Stomach (tissue), 19 donors: ENCODE measurements at regions of chr19 and their contacts with region 1.

Region 1: GRCh38 chr19:3665681-3666544 is 34.4 kb downstream of the PIP5K1C start:
- DNase-seq: peak; percentile 69 to 79
- H3K4me3 ChIP-seq: no peak overlapping the region
- H3K27ac ChIP-seq: no peak overlapping the region
- H3K4me1 ChIP-seq: peaks cover 25 to 52% (median 37%) of the 10 kb centered on the region in 4 donors
- H3K27me3 ChIP-seq: no peaks in the 10 kb centered on the region
- CTCF ChIP-seq: peak in 6 of 7 experiments; percentile 94 to 99 (median 98)
- EP300 ChIP-seq: no peak
- POLR2A ChIP-seq: no peak

Region 2: DNA sequence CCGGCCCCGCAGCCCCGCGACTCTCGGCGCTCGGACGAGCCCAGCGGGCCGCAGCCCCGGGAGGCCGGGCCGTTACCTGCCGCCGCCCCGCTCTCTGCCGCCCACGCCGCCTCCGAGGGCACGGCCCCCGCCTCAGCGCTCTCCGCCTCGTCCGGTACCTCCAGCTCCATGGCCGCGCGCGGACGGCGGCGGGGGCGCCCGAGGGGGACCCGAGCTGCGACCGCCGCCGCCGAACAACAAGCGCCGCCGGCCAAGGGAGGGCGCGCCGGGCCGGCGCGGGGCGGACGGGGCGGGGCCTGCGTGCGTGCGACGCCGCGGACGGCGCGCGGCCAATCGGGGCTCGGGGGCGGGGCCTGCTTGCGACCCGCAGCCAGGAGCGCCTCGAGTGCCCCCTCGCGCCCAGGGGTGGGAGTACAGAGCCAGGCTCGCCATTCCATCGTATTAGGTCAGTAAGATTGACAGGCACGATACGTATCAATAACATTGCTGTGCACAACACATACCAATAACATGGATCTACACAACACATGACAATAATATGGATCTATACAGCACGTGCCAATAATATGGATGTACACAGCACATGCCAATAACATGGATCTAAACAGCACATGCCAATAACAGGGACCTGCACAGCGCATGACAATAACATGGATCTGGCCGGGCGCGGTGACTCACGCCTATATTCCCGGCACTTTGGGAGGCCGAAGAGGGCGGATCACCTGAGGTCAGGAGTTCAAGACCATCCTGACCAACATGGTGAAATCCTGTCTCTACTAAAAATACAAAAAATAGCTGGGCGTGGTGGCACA is 34.5 kb after region 1 on chr19 and contains the start of gene PIP5K1C:
- intact Hi-C with region 1: loop called (anchors 5 kb)
- DNase-seq: peak; percentile 94 to 97
- H3K4me3 ChIP-seq: peak within 1 kb of the TSS; percentile 95 to 99 (median 96)
- H3K27ac ChIP-seq: peak within 1 kb of the TSS; percentile 66 to 95 (median 83)
- H3K4me1 ChIP-seq: peaks cover 15 to 52% (median 34%) of the 10 kb centered on the region in 4 donors
- H3K27me3 ChIP-seq: peaks cover 0 to 9% (median 0%) of the 10 kb centered on the region in 3 donors
- CTCF ChIP-seq: peak in 5 of 7 experiments; percentile 48 to 82 (median 78)
- EP300 ChIP-seq: no peak
- POLR2A ChIP-seq: no peak
- total RNA-seq, gene PIP5K1C: 15.1 to 164 (median 36.8) TPM

Region 3: DNA sequence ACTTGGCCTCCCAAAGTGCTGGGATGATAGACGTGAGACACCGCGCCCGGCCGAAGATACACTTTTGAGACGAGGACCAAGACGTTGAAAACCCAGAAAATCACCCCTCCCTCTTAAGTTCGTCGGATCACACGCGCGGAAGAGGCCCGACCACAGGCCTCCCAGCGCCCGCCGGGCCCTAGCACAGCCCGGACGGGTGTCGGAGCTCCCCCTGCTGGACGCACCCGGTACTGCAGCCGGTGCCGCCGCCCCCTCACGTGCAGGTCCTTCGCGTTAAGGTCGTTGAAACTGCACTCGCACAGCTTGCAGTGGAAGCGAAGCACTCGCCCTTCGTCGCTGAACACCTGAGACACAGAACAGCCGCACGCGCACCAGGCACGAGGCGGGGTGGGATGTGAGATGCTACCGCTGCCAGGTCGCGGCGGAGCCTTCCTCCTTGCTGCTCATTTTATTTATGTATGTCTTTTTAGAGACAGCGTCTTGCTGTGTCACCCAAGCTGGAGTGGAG is 156.0 kb after region 1 on chr19:
- intact Hi-C with region 1: loop called (anchors 5 kb)
- DNase-seq: peak; percentile 82 to 86
- H3K4me3 ChIP-seq: no peak overlapping the region
- H3K27ac ChIP-seq: no peak overlapping the region
- H3K4me1 ChIP-seq: peaks cover 0 to 15% (median 8%) of the 10 kb centered on the region in 4 donors
- H3K27me3 ChIP-seq: peaks cover 0 to 30% (median 3%) of the 10 kb centered on the region in 3 donors
- CTCF ChIP-seq: peak in 6 of 7 experiments; percentile 99 to 100 (median 100)
- EP300 ChIP-seq: no peak
- POLR2A ChIP-seq: no peak

Region 4: GRCh38 chr19:3950871-3951861 is 285.3 kb after region 1 on chr19:
- intact Hi-C with region 1: no loop called
- DNase-seq: peak in 1 of 2 donors; percentile 58
- H3K4me3 ChIP-seq: peak overlapping the region in 3 of 4 donors; percentile 12 to 22 (median 19)
- H3K27ac ChIP-seq: peak overlapping the region in 4 of 5 donors; percentile 32 to 82 (median 74)
- H3K4me1 ChIP-seq: peaks cover 10 to 43% (median 30%) of the 10 kb centered on the region in 4 donors
- H3K27me3 ChIP-seq: no peaks in the 10 kb centered on the region
- CTCF ChIP-seq: no peak
- EP300 ChIP-seq: no peak
- POLR2A ChIP-seq: no peak